ENCODE measurements at regions of chr21 and their contacts with region 1.

Region 1: DNA sequence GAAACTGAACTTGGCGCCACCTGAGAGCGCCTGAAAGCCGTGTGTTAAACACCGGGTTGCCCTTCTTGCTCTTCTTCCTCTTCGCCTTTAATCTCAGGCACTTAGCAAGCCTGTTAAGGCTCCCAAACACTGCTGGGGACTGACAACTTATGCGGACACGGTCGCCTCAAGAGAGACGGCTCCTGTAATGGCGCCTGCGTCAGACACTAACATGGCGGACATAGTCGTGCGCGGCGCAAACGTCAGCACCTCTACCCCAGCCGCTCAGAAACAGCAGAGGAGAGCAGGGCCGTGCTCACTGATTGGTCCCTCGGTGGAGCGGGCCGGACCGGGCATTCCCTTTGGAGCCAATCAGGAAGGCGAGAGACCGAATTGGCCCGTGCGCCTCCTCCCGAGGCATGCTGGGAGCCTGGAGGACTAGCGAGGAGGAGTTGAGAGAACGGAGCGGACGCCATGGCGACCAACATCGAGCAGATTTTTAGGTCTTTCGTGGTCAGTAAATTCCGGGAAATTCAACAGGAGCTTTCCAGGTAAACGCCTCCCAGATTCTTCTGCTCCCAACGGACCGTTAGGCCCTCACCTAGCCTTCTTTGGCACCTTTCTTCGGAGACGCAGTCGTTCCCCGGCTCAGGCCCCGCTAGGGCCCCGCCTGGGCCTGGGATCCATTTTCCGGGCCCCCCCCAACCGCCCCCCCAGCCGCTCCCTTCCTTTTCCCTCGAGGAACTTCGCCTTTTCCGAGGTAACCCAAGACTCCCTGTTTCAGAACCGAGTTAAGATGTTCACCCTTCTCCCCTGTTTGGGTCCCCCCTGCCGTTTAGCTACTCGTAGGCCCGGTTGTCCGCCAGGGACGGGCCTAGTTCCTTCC is at the start of gene SON:
- DNase-seq: peak; percentile 99
- H3K4me3 Mint-ChIP-seq: peak within 1 kb of the TSS; percentile 96
- H3K27ac Mint-ChIP-seq: peak within 1 kb of the TSS; percentile 100
- H3K4me1 Mint-ChIP-seq: peaks cover 26% of the 10 kb centered on the region
- H3K27me3 Mint-ChIP-seq: no peaks in the 10 kb centered on the region
- total RNA-seq, gene SON: 270 to 279 TPM

Region 2: DNA sequence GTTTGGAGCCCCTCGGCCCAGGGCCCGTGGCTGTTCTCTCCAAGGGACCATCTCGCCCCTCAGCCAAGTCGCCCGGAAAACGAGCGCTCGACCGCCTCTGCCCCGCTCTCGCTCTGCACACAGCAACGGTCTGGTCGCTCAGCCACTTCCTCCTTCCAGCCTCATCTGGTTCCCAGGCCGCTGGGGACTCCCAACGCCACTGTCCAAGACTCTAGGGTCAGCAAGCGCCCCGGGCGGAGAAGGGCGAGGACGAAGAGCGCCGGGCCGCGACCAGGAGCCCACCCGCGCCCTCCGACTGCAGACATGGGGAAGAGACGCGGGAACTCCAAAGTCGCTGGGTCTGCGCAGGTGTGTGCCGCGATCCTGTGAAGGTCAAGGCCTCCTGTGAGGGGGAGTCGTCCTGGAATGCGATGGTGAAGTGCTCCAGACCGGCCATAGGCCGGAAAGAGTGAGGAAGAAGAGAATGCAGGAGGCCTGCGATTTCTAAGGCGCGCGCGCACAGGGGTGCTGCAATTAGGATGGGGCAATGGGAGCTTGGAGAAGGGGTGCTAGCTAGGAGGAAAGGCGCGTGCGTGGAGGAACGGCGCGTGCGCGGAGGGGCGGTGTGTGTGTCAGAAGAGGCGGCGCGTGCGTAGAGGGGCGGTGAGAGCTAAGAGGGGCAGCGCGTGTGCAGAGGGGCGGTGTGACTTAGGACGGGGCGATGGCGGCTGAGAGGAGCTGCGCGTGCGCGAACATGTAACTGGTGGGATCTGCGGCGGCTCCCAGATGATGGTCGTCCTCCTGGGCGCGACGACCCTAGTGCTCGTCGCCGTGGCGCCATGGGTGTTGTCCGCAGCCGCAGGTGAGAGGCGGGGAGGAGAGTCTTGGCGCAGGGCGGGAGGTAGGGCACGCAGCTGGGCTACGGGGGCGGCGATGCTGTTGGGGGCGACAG is 218.3 kb before region 1 on chr21 and contains the start of gene IFNAR1:
- CTCF ChIA-PET with region 1: no interaction called
- POLR2A ChIA-PET with region 1: no interaction called
- intact Hi-C with region 1: loop called (anchors 2 kb)
- DNase-seq: peak; percentile 99
- H3K4me3 Mint-ChIP-seq: no peak within 1 kb of the TSS
- H3K27ac Mint-ChIP-seq: no peak within 1 kb of the TSS
- H3K4me1 Mint-ChIP-seq: peaks cover 26% of the 10 kb centered on the region
- H3K27me3 Mint-ChIP-seq: no peaks in the 10 kb centered on the region
- total RNA-seq, gene IFNAR1: 28.0 to 32.0 TPM

Region 3: DNA sequence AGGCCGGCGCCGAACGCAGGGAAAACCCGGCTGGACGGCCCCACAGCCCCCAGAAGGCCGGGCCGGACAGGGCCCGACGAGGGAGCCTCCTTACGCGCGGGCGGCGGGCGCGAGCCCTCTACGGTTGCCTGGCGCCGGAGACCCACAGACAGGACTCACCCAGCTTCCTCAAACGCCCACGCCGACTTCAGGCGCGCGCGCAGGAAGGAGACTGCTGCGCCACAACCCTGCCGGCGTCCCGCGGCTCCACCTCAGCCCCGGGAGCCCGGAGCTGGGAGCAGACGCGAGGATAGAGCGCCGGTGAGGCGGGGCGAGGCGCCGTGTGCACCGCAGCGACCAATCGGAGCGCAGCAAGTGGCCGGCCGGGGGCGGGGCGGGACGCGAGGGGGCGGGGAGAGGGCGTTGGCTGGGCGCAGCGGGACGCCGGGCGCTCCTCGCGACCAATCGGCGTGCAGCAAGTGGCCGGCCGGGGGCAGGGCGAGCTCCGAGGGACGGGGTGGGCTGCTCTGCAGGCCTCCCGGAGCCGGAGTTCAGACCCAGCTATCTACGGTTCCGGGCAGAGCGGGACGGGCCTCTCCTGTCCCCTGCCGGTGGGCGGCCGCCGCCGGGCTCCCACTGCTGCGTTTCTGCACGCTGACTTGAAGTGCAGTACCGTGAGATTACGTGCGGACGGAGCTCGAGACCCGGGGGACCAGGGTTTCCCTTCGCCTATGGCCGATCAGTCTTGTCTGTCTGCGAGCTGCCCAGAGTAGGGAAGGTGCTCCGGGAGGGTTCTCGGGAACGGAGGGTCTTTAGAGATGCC is 63.0 kb before region 1 on chr21 and contains the start of gene TMEM50B:
- CTCF ChIA-PET with region 1: interaction called, 5 read pairs
- POLR2A ChIA-PET with region 1: interaction called, 14 read pairs
- intact Hi-C with region 1: loop called (anchors 1 kb)
- DNase-seq: peak; percentile 99
- H3K4me3 Mint-ChIP-seq: peak within 1 kb of the TSS; percentile 92
- H3K27ac Mint-ChIP-seq: peak within 1 kb of the TSS; percentile 79
- H3K4me1 Mint-ChIP-seq: peaks cover 19% of the 10 kb centered on the region
- H3K27me3 Mint-ChIP-seq: no peaks in the 10 kb centered on the region
- total RNA-seq, gene TMEM50B: 18.6 to 21.8 TPM

Region 4: DNA sequence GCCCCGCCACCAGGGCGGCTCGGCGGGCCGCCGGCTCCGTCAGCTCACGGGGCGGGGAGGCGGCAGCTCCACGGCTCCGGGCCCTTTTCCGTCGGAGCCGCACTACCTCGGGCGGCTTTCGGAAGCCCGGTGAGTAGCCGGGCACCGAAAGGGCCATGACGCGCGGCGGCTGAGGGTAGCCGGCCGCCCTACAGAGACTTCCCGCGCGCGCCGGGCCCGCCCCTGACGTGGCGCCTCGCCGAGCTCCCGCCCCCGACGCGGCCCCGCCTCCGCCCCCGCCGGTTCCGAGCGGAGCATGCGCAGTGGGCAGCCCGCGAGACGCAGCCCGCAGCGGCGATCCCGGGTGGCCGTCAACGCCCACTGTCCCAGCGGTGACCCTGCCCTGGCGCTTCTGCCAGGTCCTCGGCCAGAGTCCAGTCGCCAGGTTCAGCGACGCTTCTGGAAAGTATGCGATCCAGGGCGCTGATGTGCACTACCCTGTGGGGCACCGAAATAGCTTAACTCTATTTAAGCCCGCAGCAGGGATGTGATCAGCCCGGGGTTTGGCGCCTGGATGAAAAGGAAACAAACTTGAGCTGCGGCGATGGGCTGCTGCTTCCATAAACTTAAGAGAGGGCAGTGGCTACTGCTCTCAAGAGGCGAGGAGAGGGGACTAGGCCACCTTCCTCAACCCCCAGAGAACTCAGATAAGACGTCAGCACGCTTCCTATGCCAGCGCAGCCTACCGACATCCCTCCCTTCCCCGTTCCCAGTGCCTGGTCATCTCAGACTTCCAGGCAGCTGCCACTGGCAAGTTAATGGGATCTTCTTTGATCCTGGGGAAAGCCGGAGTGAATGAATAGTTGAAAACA is 45.8 kb after region 1 on chr21 and contains the start of gene DONSON:
- CTCF ChIA-PET with region 1: interaction called, 6 read pairs
- POLR2A ChIA-PET with region 1: interaction called, 16 read pairs
- intact Hi-C with region 1: loop called (anchors 1 kb)
- DNase-seq: peak; percentile 90
- H3K4me3 Mint-ChIP-seq: peak within 1 kb of the TSS; percentile 92
- H3K27ac Mint-ChIP-seq: peak within 1 kb of the TSS; percentile 72
- H3K4me1 Mint-ChIP-seq: peaks cover 21% of the 10 kb centered on the region
- H3K27me3 Mint-ChIP-seq: no peaks in the 10 kb centered on the region
- total RNA-seq, gene DONSON: 38.2 to 39.0 TPM

Region 5: GRCh38 chr21:33641336-33642026 is 98.6 kb after region 1 on chr21 and contains the start of gene CRYZL1:
- CTCF ChIA-PET with region 1: no interaction called
- POLR2A ChIA-PET with region 1: no interaction called
- intact Hi-C with region 1: loop called (anchors 1 kb)
- DNase-seq: peak; percentile 100
- H3K4me3 Mint-ChIP-seq: peak within 1 kb of the TSS; percentile 86
- H3K27ac Mint-ChIP-seq: peak within 1 kb of the TSS; percentile 93
- H3K4me1 Mint-ChIP-seq: peaks cover 24% of the 10 kb centered on the region
- H3K27me3 Mint-ChIP-seq: peaks cover 16% of the 10 kb centered on the region
- total RNA-seq, gene CRYZL1: 32.8 to 34.9 TPM

Region 6: DNA sequence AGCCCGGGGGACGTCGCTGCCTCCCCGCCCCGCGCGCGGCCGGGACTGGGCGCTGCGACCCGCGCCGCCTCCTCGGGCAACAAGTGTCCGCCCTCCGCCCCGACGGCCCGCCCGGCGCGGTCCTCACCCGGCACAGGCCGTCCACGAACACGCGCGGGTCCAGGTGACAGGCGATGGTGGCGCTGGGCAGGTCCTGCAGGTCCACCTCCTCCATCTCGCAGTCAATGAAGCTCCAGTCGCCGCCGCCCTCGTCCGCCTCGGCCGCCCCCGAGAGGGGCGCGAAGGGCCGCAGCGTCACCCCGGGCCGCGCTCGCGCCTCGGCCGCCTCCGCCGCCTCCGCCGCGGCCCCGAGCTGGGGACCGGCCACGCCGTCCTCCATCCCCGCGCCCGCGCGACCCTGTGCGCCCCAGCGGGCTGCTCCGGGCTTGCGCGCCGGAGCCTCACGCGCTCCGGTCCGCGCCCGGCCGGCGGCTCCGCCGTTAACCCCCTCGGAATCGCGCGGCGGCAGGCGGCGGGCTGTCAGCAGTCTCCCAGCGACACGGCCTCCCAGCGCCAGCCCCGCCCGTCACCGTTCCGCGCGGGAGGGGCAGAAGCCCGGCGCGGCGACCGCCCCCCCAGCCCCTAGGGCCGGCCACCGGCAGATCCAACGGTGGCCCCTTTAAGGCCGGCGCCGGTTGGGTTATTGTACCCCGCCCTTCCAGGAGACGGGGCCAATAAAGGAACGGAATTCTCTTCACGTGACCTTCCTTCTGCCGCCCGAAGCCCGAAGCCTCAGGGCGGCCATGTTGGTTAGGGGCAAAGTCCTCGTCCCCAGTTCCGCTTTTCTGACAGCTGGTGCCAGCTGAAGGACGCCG is 1072.0 kb after region 1 on chr21 and contains the start of gene RCAN1:
- CTCF ChIA-PET with region 1: no interaction called
- POLR2A ChIA-PET with region 1: no interaction called
- intact Hi-C with region 1: loop called (anchors 10 kb)
- DNase-seq: peak; percentile 92
- H3K4me3 Mint-ChIP-seq: peak within 1 kb of the TSS; percentile 79
- H3K27ac Mint-ChIP-seq: peak within 1 kb of the TSS; percentile 69
- H3K4me1 Mint-ChIP-seq: peaks cover 15% of the 10 kb centered on the region
- H3K27me3 Mint-ChIP-seq: no peaks in the 10 kb centered on the region
- total RNA-seq, gene RCAN1: 8.6 to 9.7 TPM